Gastrocnemius medialis (tissue), 4 donors: ENCODE measurements at regions of chr3 and their contacts with region 1.

Region 1: GRCh38 chr3:47791193-47791855 is 9.6 kb upstream of the SMARCC1 start:
- DNase-seq: no peak
- ATAC-seq: no peak
- H3K4me3 ChIP-seq: no peak overlapping the region
- H3K27ac ChIP-seq: no peak overlapping the region
- H3K4me1 ChIP-seq: no peaks in the 10 kb centered on the region
- H3K27me3 ChIP-seq: no peaks in the 10 kb centered on the region
- CTCF ChIP-seq: no peak
- POLR2A ChIP-seq: no peak

Region 2: GRCh38 chr3:47420511-47421484 is 370.5 kb before region 1 on chr3:
- in situ Hi-C with region 1: no loop called
- intact Hi-C with region 1: loop called (anchors 1 kb)
- DNase-seq: peak; percentile 58 to 83
- ATAC-seq: peak; percentile 79 to 87
- H3K4me3 ChIP-seq: no peak overlapping the region
- H3K27ac ChIP-seq: peak overlapping the region; percentile 41 to 78 (median 62)
- H3K4me1 ChIP-seq: peaks cover 10% of the 10 kb centered on the region in 2 donors
- H3K27me3 ChIP-seq: no peaks in the 10 kb centered on the region
- CTCF ChIP-seq: peak; percentile 86 to 94 (median 91)
- POLR2A ChIP-seq: no peak

Region 3: GRCh38 chr3:47513125-47513929 is 278.0 kb before region 1 on chr3 and contains the start of gene ELP6:
- in situ Hi-C with region 1: loop called in 2 of 4 experiments (anchors 5 kb)
- intact Hi-C with region 1: loop called (anchors 2 kb)
- DNase-seq: peak; percentile 94 to 96
- ATAC-seq: peak; percentile 97
- H3K4me3 ChIP-seq: peak within 1 kb of the TSS; percentile 59 to 93 (median 78)
- H3K27ac ChIP-seq: peak within 1 kb of the TSS; percentile 84 to 98 (median 94)
- H3K4me1 ChIP-seq: peaks cover 0 to 5% of the 10 kb centered on the region in 2 donors
- H3K27me3 ChIP-seq: no peaks in the 10 kb centered on the region
- CTCF ChIP-seq: peak in 3 of 5 experiments; percentile 32 to 43 (median 34)
- POLR2A ChIP-seq: peak; percentile 47 to 63
- total RNA-seq, gene ELP6: 16.9 to 31.1 (median 26.6) TPM

Region 4: DNA sequence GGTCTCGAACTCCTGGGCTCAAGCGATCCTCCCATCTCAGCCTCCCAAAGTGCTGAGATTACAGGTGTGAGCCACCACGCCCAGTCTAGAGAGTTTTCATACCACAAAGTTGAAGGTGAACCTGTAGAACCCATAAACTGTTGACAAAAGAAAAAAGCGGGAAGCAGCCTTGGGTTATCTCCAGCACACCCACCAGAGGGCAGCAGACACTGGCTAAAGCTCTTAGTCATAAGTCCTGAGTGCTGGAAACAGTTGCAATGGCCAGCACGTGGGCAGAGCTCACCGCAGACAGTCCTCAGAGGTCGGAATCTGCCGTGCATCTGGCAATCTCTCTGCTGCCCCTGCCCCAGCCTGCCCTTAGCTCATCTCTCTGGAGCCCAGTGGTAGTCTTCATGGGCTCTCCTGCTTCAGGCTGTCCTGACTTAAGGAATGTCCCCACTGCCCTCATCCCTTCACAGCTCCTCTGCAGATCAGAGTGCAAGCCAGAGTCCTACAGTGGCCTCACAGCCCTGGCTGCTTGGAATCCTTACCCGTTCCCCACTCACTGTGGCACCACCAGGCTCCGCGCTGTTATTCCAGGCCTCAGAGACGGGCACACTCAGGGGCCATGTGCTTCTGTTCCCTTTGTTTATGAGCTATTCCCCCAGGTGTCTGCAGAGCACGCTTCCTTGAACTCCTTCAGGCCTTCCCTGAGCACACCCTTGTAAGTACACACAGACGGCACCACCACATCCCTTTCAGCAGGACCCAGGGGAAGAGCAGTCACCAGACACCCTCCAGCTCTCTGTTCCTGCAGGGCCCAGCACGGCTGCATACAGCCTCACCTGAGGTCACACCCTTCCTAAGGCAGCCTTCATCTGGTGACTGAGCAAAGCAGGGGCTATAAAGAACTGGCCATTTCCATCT is 269.0 kb before region 1 on chr3:
- in situ Hi-C with region 1: loop called in 3 of 4 experiments (anchors 5 kb)
- intact Hi-C with region 1: loop called (anchors 1 kb)
- DNase-seq: peak; percentile 72 to 83
- ATAC-seq: peak; percentile 98 to 99
- H3K4me3 ChIP-seq: no peak overlapping the region
- H3K27ac ChIP-seq: no peak overlapping the region
- H3K4me1 ChIP-seq: peaks cover 4% of the 10 kb centered on the region in 2 donors
- H3K27me3 ChIP-seq: no peaks in the 10 kb centered on the region
- CTCF ChIP-seq: peak; percentile 89 to 95 (median 94)
- POLR2A ChIP-seq: no peak

Region 5: DNA sequence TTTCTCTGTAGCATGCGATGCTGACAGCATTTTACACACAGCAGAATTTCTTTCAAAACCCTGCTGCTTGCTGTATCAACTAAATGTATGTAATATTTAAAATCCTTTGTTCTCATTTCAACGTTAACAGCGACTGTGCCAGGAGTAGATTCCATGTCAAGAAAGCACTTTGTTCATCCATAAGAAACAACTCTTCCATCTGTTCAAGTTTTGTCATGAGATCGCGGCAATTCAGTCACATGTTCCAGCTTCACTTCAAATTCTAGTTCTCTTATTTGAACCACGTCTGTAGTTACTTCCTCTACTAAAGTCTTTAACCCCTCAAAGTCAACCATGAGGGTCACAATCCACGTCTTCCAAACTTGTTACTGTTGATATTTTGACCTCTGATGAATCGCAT is 60.3 kb before region 1 on chr3:
- in situ Hi-C with region 1: no loop called
- intact Hi-C with region 1: no loop called
- DNase-seq: no peak
- ATAC-seq: no peak
- H3K4me3 ChIP-seq: no peak overlapping the region
- H3K27ac ChIP-seq: no peak overlapping the region
- H3K4me1 ChIP-seq: no peaks in the 10 kb centered on the region
- H3K27me3 ChIP-seq: no peaks in the 10 kb centered on the region
- CTCF ChIP-seq: no peak
- POLR2A ChIP-seq: no peak

Region 6: DNA sequence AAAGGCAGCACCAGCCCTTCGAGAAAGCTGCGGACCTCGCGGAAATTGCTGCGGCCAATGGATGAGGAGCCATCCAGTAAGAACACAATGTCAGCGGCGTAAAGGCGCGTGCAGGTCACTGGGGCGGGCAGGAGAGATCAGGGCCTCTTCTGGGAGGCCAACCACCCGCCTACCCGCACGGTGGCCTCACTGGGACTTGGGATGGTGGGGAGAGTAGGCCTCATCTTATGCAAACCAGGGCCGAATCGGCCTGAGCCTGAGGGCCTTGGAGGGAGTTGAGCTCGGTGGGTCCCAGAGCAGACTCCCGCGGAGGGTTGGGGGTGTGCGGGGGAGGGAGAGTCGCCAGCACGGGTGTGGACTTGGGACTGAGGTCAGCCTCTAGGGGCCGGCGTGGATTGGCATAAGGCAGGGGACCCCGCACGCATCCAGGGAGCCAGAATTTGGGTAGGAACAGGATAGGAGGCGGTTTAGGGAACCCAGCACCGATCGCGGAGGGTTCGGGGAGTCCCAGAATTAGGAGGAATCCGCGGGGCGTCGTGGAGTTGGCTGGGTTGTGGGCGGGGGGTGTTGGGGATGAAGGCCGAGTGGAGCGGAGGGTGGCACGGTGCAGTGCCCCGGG is 803.2 kb after region 1 on chr3:
- in situ Hi-C with region 1: no loop called
- intact Hi-C with region 1: no loop called
- DNase-seq: no peak
- ATAC-seq: no peak
- H3K4me3 ChIP-seq: peak overlapping the region; percentile 38 to 50 (median 44)
- H3K27ac ChIP-seq: peak overlapping the region in 1 of 4 donors; percentile 47
- H3K4me1 ChIP-seq: peaks cover 42 to 47% of the 10 kb centered on the region in 2 donors
- H3K27me3 ChIP-seq: no peaks in the 10 kb centered on the region
- CTCF ChIP-seq: no peak
- POLR2A ChIP-seq: no peak